MCF 10A (cell line): ENCODE measurements at regions of chr11 and their contacts with region 1.

Region 1: GRCh38 chr11:92246630-92247029 is 22.0 kb downstream of the FAT3 start:
- DNase-seq: peak; percentile 14
- H3K4me3 Mint-ChIP-seq: no peak overlapping the region
- H3K27ac Mint-ChIP-seq: no peak overlapping the region
- H3K4me1 Mint-ChIP-seq: no peaks in the 10 kb centered on the region
- H3K27me3 Mint-ChIP-seq: no peaks in the 10 kb centered on the region
- CTCF ChIP-seq: no peak

Region 2: DNA sequence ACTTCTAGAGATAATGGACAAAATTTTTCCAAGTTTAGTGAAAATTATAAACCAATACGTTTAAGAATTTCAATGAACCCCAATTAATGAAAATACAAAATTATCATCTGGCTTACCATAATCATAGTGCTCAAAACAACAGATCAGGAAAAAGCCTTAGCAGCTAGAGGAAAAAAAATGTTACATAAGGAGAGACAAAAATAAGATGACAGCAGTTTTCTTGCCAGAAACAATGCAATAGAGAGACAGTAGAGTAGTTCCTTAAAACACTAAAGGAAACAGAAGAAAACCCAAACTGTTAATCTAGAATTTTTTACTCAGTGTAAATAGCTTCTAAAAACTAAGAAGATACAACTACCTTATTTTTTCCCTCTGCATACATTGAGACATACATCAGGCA is 1682.1 kb before region 1 on chr11:
- CTCF ChIA-PET with region 1: no interaction called
- POLR2A ChIA-PET with region 1: no interaction called
- intact Hi-C with region 1: loop called (anchors 5 kb)
- DNase-seq: no peak
- H3K4me3 Mint-ChIP-seq: no peak overlapping the region
- H3K27ac Mint-ChIP-seq: no peak overlapping the region
- H3K4me1 Mint-ChIP-seq: no peaks in the 10 kb centered on the region
- H3K27me3 Mint-ChIP-seq: no peaks in the 10 kb centered on the region
- CTCF ChIP-seq: no peak

Region 3: DNA sequence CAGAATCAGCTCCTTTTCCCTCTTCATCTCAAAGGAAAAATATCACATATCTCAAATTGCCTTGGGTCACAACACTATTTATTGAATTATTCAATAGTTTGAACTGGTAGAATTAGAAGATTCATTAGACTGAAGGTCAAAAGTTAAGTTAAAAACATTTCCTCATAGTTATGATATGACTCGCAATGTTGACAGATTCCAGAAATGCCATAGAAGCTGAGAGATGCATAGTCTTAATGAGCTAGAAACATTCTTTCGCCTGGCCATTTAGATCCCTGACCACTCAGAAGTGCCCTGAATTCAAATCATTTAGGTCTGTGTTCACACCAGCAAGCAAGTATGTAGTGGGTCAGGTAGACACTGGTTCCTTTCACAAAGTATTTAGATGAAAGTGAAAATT is 22.4 kb after region 1 on chr11:
- CTCF ChIA-PET with region 1: no interaction called
- POLR2A ChIA-PET with region 1: no interaction called
- intact Hi-C with region 1: no loop called
- DNase-seq: peak; percentile 28
- H3K4me3 Mint-ChIP-seq: no peak overlapping the region
- H3K27ac Mint-ChIP-seq: peak overlapping the region; percentile 69
- H3K4me1 Mint-ChIP-seq: peaks cover 28% of the 10 kb centered on the region
- H3K27me3 Mint-ChIP-seq: no peaks in the 10 kb centered on the region
- CTCF ChIP-seq: no peak